ENCODE measurements at regions of chr3 and their contacts with region 1.

Region 1: DNA sequence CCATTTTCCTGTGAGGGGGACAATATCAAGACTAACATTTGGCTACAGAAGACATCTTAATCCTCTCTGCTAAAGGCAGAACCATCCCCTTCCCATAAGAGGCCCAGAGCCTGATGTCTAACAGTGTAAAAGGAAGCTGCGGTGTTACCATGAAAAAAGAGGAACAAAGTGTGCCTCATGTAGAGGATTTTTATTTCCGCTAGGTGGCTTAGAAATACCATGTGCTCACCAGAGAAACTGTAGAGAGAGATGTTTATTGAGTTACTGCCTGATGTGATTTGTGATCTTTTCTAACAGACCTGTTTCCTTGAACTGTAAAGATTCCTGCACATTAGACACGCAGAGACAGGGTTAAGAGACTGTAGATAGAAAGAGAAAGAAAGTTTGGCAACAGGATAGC is 22.0 kb downstream of the OR5H15 start:
- DNase-seq: no peak
- H3K4me3 Mint-ChIP-seq: no peak overlapping the region
- H3K27ac Mint-ChIP-seq: no peak overlapping the region
- H3K4me1 Mint-ChIP-seq: no peaks in the 10 kb centered on the region
- H3K27me3 Mint-ChIP-seq: peaks cover 18% of the 10 kb centered on the region
- CTCF ChIP-seq: no peak

Region 2: DNA sequence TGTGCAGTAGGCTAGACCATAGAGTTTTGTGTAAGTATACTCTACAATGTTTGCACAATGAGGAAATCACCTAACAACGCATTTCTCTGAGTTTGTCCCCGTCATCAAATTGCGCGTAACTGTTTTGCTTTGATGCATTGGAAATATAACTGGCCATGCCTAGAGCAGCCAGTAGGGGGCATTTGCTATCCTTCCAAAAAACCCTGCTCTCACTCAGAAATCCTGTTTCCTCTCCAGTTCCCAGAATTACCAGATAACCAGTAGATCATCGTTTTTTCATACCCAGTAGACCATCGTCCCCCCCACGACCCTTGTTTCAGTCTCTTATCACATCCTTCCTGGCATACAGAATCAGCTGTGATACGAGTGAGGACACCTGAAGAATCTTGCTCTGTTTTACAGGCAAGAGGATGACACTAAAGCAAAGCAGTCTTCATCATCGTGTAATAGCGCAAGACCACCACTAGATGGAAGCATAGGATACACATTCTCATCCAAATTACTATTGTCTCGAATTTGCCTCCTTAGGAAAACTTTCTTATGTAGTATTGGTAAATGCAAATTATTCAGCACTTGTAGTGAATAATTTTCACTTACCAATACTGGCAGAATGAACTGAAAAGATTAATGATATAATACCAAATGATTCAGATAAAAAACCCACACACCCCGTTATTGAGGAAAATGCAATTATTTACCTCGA is 149.1 kb before region 1 on chr3:
- CTCF ChIA-PET with region 1: interaction called, 3 read pairs
- intact Hi-C with region 1: loop called (anchors 1 kb)
- DNase-seq: peak; percentile 65
- H3K4me3 Mint-ChIP-seq: peak overlapping the region; percentile 71
- H3K27ac Mint-ChIP-seq: no peak overlapping the region
- H3K4me1 Mint-ChIP-seq: no peaks in the 10 kb centered on the region
- H3K27me3 Mint-ChIP-seq: peaks cover 9% of the 10 kb centered on the region
- CTCF ChIP-seq: peak; percentile 69

Region 3: DNA sequence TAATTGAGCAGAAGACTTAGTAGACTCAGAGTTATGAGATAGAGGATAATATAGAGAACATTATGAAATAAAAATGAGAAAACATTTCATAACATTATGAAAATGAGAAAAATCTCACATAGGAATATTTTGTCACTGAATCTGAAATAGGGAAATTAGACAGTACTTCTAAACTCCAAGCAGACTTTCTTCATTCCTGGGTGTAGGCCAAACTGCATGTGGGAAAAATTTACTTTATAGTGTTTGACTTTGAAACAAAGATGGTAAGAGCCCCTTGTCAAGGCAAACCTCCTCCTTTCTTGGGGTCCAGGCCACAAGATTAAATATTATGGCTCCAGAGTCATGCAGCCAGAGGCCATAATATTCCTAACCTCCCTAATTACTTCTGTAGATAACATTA is 48.0 kb before region 1 on chr3:
- CTCF ChIA-PET with region 1: no interaction called
- intact Hi-C with region 1: loop called (anchors 1 kb)
- DNase-seq: no peak
- H3K4me3 Mint-ChIP-seq: no peak overlapping the region
- H3K27ac Mint-ChIP-seq: no peak overlapping the region
- H3K4me1 Mint-ChIP-seq: no peaks in the 10 kb centered on the region
- H3K27me3 Mint-ChIP-seq: peaks cover 18% of the 10 kb centered on the region
- CTCF ChIP-seq: no peak

Region 4: DNA sequence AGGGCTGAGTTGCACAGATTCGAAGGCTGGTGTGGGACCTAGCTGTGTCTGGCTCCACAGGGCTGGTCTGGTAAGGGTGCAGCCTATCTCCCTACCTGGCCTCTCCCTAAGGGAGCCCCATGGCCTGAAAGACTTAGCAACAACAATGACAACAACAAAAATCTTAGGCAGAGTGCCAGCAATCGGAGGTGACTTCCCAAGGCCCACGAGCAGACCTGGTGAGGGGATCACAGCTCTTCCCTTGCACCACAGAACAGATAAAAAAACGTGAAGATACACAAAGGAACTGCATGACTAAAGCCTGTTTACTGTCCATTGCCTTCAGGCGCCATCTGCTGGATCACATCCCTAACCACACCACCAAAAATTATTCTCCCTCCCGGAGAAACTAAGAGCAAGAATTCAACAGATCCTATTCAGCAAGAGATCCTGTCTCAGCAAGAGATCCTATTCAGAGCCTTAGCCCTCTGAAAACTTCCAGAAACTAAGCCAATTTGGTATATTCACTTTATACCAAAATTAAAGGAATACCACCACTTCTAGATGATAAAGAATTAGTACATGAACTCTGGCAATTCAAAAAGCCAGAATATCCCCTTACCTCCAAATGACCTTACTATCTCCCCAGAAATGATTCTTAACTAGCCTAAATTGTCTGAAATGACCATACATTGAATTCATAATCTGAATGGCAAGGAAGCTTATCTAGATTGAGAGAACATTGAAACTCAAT is 141.0 kb after region 1 on chr3:
- CTCF ChIA-PET with region 1: no interaction called
- intact Hi-C with region 1: loop called (anchors 5 kb)
- DNase-seq: peak; percentile 46
- H3K4me3 Mint-ChIP-seq: no peak overlapping the region
- H3K27ac Mint-ChIP-seq: no peak overlapping the region
- H3K4me1 Mint-ChIP-seq: peaks cover 12% of the 10 kb centered on the region
- H3K27me3 Mint-ChIP-seq: peaks cover 45% of the 10 kb centered on the region
- CTCF ChIP-seq: peak; percentile 47